ENCODE measurements at regions of chr9 and their contacts with region 1.

Region 1: DNA sequence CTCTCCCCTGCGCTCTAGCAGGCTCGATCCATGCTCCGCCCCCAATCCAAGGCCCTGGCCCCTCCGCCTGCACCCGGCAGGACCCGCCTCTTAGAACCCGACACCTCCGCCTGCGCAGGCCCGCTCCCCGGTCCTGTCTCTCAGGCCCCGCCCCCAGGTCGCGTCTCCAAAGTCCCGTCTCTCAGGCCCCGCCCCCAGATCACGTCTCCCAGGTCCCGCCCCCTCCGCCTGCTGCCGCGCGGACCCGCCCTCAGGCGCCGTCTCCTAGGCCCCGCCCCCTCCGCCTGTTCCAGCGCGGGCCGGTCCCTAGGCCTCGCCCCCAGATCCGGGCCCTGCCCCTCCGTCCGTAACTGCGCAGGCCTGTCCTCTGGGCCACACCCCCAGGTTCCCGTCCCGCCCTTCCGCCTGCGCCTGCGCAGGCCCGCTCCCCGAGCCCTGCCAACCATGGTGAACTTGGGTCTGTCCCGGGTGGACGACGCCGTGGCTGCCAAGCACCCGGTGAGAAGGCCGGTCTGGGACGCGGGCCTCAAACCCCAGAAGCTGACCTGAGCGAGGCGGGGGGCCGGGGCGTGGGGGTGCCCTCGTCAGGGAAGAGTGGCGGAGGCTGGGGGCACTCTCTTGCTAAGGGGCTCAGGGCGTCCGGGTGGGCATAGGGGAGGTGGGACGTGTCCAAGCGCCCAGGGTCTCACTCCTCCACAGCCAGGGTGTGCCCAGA is at the start of gene TMEM141:
- DNase-seq: peak; percentile 100
- H3K4me3 Mint-ChIP-seq: peak within 1 kb of the TSS; percentile 87
- H3K27ac Mint-ChIP-seq: peak within 1 kb of the TSS; percentile 91
- H3K4me1 Mint-ChIP-seq: peaks cover 26% of the 10 kb centered on the region
- H3K27me3 Mint-ChIP-seq: peaks cover 16% of the 10 kb centered on the region
- total RNA-seq, gene TMEM141: 36.1 and 40.1 TPM in 2 replicates

Region 2: DNA sequence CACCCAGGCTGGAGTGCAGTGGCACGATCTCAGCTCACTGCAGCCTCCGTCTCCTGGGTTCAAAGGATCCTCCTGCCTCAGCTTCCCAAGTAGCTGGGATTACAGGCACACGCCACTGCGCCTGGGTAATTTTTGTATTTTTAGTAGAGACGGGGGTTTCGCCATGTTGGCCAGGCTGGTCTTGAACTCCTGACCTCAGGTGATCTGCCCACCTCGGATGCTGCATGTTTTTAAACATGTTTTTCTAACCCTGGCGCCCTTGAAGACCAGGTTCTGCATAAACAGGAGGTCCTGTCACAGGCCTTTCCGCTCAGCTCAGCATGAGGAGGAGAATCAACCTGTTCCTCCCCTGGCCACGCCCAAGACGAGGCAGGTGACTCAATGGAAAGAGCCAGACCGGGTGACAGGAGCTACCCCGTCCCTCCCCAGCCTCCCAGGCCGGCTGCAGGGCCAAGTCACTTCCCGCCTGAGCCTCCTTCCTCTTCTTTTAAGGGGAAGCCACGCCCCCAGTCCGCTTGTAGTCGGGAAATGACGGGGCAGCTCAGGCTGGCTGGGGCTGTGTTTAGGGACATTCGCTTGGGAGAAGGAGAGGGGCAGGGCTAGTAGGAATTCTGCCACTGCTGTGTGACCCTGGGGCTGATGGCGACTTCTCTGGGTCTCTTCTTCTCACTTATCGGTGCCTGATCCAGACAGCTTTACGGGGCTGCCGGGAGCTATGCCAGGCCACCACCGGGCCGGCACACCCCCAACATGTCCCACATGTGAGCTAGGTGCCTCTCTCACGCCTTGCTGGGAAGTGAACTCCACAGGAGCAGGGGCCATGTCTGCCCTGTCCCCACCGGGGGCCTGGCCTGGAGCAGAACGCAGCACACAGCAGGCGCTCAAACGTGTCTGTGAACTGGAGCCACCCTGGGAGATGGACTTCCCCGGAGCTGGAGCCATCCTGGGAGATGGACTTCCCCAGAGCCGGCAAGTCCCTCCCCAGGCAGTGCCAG is 251.4 kb before region 1 on chr9:
- intact Hi-C with region 1: loop called (anchors 1 kb)
- DNase-seq: peak; percentile 97
- H3K4me3 Mint-ChIP-seq: peak overlapping the region; percentile 81
- H3K27ac Mint-ChIP-seq: peak overlapping the region; percentile 100
- H3K4me1 Mint-ChIP-seq: peaks cover 43% of the 10 kb centered on the region
- H3K27me3 Mint-ChIP-seq: no peaks in the 10 kb centered on the region

Region 3: DNA sequence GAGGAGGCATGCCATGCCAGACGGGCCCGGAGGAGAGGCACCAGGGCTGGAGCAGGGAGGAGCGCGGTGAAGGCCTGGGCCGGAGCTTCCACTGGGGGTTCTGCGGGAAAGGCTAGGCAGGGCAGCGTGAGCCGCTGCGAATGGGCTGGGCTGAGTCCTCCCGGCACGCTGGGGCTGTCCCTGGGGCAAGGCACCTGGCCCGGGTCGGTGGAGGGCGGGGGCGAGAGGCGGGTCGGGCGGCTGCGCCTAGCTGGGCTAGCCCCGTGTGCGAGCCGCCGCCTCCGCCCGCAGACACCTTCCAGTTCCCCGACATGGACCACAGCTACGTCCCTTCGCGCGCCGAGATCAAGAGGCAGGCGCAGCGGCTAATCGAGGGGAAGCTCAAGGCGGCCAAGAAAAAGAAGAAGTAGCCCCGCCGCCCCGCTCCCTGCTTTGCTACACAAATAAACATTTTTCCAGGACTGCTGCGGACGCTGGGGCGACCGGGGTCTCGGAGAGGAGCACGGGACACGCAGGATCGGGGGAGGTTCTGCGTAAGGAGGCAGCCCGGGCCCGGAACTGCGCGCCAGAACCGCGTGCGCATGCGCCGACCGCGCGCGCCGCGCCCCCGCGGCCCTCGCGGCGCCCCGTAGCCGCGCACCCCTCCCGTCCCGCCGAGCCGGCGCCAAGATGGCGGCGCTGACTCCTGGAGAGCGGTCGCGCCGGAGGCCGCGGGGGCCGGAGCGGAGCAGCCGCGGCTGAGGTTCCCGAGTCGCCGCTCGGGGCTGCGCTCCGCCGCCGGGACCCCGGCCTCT is 16.4 kb after region 1 on chr9 and contains the start of gene RABL6:
- intact Hi-C with region 1: loop called (anchors 2 kb)
- DNase-seq: peak; percentile 96
- H3K4me3 Mint-ChIP-seq: peak within 1 kb of the TSS; percentile 91
- H3K27ac Mint-ChIP-seq: peak within 1 kb of the TSS; percentile 93
- H3K4me1 Mint-ChIP-seq: peaks cover 36% of the 10 kb centered on the region
- H3K27me3 Mint-ChIP-seq: no peaks in the 10 kb centered on the region
- total RNA-seq, gene RABL6: 116 and 119 TPM in 2 replicates

Region 4: GRCh38 chr9:136868644-136869043 is 77.6 kb after region 1 on chr9:
- intact Hi-C with region 1: no loop called
- DNase-seq: no peak
- H3K4me3 Mint-ChIP-seq: peak overlapping the region; percentile 42
- H3K27ac Mint-ChIP-seq: peak overlapping the region; percentile 24
- H3K4me1 Mint-ChIP-seq: peaks cover 19% of the 10 kb centered on the region
- H3K27me3 Mint-ChIP-seq: no peaks in the 10 kb centered on the region

Region 5: DNA sequence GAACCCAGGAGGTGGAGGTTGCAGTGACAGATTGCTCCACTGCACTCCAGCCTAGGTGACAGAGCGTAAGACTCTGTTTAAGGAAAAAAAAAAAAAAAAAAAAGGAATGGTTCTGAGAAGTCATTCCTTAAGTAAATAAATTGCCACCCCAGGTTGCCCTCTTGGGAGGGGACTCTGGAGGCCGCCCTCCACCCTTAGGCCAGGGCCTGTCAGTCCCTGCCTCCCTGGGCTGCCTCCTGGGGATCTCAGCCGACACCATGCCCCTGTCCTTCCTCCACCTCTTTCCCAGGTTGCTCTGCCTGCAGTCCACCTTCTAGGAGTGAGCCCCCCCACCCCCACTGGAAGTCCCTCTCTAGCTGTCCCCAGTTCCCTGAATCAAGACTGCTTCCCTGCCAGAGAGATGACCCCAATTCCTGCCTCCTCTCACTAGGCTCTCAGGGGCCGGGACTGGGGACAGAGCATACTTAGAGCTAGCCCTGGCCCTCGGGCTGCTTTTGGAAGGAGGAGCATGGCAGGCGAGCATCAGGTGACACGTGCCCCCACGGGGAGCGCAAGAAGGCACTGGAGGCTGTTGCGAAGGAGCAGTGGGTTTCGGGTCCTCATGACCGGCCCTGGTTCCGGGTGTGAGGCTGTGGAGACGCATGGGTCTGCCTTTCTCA is 104.8 kb after region 1 on chr9:
- intact Hi-C with region 1: no loop called
- DNase-seq: no peak
- H3K4me3 Mint-ChIP-seq: no peak overlapping the region
- H3K27ac Mint-ChIP-seq: no peak overlapping the region
- H3K4me1 Mint-ChIP-seq: peaks cover 35% of the 10 kb centered on the region
- H3K27me3 Mint-ChIP-seq: no peaks in the 10 kb centered on the region

Region 6: DNA sequence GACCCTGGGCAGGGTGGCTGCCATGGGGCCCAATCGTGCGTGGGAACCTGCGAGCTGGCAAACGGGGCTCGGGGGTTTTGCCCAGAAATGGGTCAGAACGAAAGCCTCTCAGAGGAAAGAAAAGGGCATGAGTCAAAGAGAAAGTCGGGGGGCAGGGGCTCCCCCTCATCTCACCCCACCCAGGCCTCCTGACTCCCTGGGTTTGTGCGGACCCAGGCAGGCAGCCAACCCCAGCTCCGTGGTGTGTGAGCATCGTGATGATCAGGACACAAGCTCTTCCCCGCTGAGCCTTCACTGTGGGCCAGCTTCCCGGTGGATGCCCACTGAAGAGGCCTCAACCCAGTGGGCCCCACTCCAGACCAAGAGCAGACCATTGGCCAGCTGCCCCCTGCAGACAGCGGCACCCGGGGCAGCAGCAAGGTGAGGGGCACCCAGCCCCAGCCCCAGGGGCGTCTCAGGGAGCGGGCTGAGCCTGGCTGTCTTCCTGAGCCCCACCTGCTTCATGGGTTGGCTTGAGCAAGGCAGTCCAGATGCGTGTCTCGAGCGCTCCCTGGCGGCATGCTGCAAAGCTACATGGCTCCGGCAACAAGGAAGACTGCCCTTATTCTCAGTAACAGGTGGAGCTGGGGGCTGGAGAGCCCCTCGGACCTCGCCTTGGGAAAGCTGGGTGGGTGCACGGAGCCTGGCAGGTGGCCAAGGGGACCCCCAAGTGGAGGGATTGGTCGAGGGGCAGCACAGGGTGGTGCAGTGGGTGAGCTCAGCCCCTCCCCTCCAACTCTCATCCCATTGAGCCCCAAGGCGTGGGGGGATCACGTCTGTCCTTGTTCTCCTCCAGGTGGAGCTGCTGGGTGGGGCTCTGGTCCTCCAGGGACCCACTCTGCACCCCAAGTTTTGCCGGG is 244.0 kb after region 1 on chr9:
- intact Hi-C with region 1: loop called (anchors 1 kb)
- DNase-seq: peak; percentile 95
- H3K4me3 Mint-ChIP-seq: peak overlapping the region; percentile 80
- H3K27ac Mint-ChIP-seq: peak overlapping the region; percentile 83
- H3K4me1 Mint-ChIP-seq: peaks cover 31% of the 10 kb centered on the region
- H3K27me3 Mint-ChIP-seq: peaks cover 2% of the 10 kb centered on the region

Region 7: DNA sequence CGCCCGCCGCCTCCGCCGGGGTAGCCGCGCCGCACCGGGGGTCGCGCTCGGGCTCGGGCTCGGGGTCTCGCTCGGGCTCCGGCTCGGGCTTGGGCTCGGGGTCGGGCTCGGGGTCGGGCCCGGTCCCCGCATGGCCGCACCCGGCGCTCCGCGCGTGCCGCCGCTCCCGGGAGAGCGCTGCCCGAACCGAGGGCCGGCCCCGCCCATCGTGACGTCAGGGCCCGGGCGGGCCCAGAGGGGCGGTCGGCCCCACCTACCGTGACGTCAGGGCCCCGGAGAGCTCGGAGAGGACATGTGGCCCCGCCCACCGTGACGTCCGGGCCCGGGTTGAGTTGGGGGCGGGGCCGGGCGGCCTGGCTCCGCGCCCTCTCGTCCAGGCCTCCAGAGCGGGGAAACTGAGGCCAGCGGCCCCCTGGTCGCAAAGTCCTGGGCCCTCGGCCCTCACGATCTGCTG is 668.1 kb after region 1 on chr9 and contains the start of gene NSMF:
- intact Hi-C with region 1: loop called (anchors 10 kb)
- DNase-seq: peak; percentile 99
- H3K4me3 Mint-ChIP-seq: peak within 1 kb of the TSS; percentile 57
- H3K27ac Mint-ChIP-seq: no peak within 1 kb of the TSS
- H3K4me1 Mint-ChIP-seq: peaks cover 16% of the 10 kb centered on the region
- H3K27me3 Mint-ChIP-seq: no peaks in the 10 kb centered on the region
- total RNA-seq, gene NSMF: 68.6 and 69.6 TPM in 2 replicates